ENCODE measurements at regions of chr1 and their contacts with region 1.

Region 1: GRCh38 chr1:28259307-28260167 is at the start of gene SESN2:
- DNase-seq: peak; percentile 99
- H3K4me3 Mint-ChIP-seq: peak within 1 kb of the TSS; percentile 82
- H3K27ac Mint-ChIP-seq: peak within 1 kb of the TSS; percentile 90
- H3K4me1 Mint-ChIP-seq: peaks cover 51% of the 10 kb centered on the region
- H3K27me3 Mint-ChIP-seq: no peaks in the 10 kb centered on the region
- total RNA-seq, gene SESN2: 18.7 and 19.3 TPM in 2 replicates

Region 2: DNA sequence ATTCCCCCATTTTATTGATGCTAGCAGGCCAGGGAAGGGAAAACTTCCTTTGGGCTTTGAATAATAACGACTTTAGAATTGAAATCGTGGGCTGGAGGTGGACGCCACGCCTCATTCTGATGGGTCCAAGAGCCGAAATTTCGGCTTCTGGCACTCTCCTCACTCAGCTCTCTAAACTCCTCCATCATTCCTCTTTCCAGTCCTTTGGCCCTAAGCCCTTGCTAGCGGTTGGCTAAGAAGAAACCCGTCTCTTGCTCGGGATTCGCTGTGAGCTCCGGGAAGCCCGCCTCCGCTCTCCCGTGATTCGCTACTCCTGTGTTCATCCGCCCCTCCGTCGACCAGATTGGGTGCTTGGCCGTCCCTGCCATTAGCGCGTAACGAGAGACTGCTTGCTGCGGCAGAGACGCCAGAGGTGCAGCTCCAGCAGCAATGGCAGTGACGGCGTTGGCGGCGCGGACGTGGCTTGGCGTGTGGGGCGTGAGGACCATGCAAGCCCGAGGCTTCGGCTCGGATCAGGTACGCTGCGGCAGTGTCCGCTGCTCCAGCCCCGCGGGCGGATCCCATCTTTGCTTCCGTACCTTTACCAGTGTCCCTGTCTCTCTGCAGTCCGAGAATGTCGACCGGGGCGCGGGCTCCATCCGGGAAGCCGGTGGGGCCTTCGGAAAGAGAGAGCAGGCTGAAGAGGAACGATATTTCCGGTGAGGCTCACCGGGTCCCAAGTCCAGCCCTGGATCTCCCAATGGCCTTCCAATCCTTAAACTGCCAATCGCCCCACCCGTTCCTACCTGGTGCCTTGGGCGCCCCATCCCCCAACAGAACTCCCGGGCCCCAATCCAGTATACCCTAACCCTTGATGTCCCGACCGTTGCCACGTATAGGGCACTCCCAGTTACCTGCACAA is 23.5 kb before region 1 on chr1 and contains the start of gene ATP5IF1:
- intact Hi-C with region 1: loop called (anchors 1 kb)
- DNase-seq: peak; percentile 94
- H3K4me3 Mint-ChIP-seq: no peak within 1 kb of the TSS
- H3K27ac Mint-ChIP-seq: no peak within 1 kb of the TSS
- H3K4me1 Mint-ChIP-seq: peaks cover 11% of the 10 kb centered on the region
- H3K27me3 Mint-ChIP-seq: no peaks in the 10 kb centered on the region
- total RNA-seq, gene ATP5IF1: 128 and 132 TPM in 2 replicates

Region 3: DNA sequence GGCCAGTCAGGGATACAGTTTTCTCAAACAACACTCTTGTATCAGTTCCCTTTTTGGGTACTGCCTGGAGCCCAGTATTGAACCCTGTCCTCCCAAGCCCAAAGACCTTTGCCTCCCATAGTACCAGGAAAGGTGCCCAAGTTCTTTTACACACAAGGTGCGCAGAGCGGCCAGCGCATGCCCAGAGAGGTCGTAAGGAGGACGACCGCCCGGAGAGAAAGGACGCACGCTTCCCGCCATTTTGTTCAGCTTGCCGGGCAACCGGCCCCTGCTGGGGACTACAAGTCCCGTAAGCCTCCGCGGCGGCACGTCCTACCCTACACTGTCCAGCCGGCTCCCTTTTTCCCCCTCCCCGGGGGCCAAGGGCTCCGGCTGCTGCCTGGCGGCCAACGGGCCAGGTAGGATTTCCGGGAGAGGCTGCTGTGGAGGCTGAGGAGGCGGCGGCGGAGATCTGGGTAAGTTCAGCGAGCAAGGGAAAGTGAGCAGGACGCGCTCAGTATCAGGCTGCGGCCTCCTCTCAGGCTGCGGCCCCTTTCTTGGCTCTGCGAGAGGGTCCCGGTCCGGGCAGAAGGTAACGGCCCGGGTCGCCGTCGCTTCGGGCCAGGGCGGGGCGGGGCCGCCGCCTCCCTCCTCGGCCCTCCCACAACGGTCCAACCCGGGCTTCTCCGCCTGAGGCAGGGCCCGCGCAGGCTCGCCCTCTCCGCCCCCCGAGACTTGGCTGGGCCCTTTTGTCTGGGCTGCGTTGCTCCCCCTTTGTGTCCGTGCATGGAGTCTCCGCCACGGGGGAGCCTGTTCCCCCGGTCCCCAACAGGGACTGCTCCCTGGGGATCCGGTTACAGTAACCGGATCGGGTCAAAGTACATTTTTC is 110.1 kb after region 1 on chr1 and contains the start of gene PHACTR4:
- intact Hi-C with region 1: loop called (anchors 1 kb)
- DNase-seq: peak; percentile 78
- H3K4me3 Mint-ChIP-seq: peak within 1 kb of the TSS; percentile 91
- H3K27ac Mint-ChIP-seq: peak within 1 kb of the TSS; percentile 95
- H3K4me1 Mint-ChIP-seq: peaks cover 36% of the 10 kb centered on the region
- H3K27me3 Mint-ChIP-seq: peaks cover 3% of the 10 kb centered on the region
- total RNA-seq, gene PHACTR4: 28.9 and 31.8 TPM in 2 replicates

Region 4: GRCh38 chr1:28518000-28518744 is 258.6 kb after region 1 on chr1:
- intact Hi-C with region 1: no loop called
- DNase-seq: peak; percentile 86
- H3K4me3 Mint-ChIP-seq: peak overlapping the region; percentile 92
- H3K27ac Mint-ChIP-seq: peak overlapping the region; percentile 92
- H3K4me1 Mint-ChIP-seq: peaks cover 33% of the 10 kb centered on the region
- H3K27me3 Mint-ChIP-seq: no peaks in the 10 kb centered on the region